CD4-positive, alpha-beta T cell (primary cell): ENCODE measurements at regions of chr5 and their contacts with region 1.

Region 1: DNA sequence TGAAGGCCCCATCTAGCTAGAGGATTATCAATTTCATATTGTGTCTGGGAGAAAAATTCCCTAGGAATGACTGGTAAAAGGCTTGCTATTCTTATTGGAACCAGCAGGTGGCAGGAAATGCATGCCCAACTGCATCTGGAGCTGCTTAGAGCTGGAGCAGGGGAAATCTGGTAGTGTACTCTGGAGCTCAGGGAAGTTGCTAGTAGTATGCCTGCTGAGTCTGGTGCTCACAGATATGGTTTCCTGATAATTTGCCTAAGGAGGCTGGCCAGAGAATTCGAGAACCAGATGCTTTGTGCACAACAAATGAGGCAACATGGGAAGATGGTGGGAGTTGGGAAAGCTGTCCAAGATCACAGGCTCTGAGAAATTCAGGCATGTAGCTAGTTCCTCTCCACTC is 53.7 kb downstream of the G3BP1 start:
- DNase-seq: peak in 9 of 14 experiments; percentile 5 to 68 (median 15)
- ATAC-seq: no peak
- H3K4me3 ChIP-seq: no peak overlapping the region
- H3K4me3 Mint-ChIP-seq: no peak overlapping the region
- H3K27ac ChIP-seq: no peak overlapping the region
- H3K27ac Mint-ChIP-seq: no peak overlapping the region
- H3K4me1 ChIP-seq: peaks cover 3% of the 10 kb centered on the region
- H3K4me1 Mint-ChIP-seq: peaks cover 22% of the 10 kb centered on the region
- H3K27me3 ChIP-seq: no peaks in the 10 kb centered on the region
- H3K27me3 Mint-ChIP-seq: no peaks in the 10 kb centered on the region
- CTCF ChIP-seq: peak; percentile 79

Region 2: DNA sequence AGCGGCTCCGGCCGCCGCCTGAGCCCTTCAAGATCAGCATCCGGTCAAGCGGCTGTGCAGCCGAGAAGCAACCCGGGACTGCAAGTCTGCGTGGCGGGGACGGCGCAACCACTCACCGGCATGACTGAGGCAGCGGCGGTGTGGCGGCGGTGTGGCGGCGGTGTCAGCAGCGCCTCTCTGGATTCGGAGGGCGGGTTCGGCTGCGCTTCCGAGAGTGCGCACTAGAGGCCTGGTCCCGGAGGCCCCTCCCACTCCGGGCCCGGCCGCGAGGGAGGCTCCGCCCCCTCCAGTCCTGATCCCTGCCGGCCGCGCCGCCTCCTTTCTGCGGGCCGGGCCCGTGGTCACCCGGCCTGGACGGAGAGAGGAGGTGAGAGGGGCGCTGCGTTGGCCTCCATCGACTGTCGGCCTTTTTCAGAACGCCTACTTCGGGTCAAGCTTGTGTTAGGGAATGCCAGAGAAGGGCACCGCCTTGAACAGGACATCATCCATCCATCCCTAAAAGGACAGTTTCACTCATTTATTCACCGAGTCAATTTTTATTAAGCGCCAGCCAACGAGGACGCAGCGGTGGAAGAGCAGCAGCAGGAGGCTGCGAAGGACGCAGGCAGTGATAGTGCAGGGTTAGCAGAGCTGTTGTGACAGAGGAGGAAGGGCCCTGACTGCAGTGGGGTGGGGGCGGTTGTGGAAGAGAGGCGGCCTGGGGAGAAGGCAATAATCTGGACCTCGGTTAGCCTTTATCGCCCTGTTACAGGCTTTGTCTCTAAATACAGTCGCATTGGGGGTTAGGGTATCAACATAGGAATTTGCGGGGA is 66.8 kb before region 1 on chr5 and contains the start of gene ATOX1:
- CTCF ChIA-PET with region 1: no interaction called
- POLR2A ChIA-PET with region 1: no interaction called
- intact Hi-C with region 1: no loop called
- DNase-seq: peak; percentile 84 to 96 (median 89)
- ATAC-seq: peak; percentile 98
- H3K4me3 ChIP-seq: peak within 1 kb of the TSS; percentile 95
- H3K4me3 Mint-ChIP-seq: peak within 1 kb of the TSS; percentile 97
- H3K27ac ChIP-seq: peak within 1 kb of the TSS; percentile 55 to 68
- H3K27ac Mint-ChIP-seq: peak within 1 kb of the TSS; percentile 95
- H3K4me1 ChIP-seq: peaks cover 39% of the 10 kb centered on the region
- H3K4me1 Mint-ChIP-seq: peaks cover 47% of the 10 kb centered on the region
- H3K27me3 ChIP-seq: no peaks in the 10 kb centered on the region
- H3K27me3 Mint-ChIP-seq: no peaks in the 10 kb centered on the region
- CTCF ChIP-seq: no peak
- total RNA-seq, gene ATOX1: 11.2 to 13.3 TPM

Region 3: DNA sequence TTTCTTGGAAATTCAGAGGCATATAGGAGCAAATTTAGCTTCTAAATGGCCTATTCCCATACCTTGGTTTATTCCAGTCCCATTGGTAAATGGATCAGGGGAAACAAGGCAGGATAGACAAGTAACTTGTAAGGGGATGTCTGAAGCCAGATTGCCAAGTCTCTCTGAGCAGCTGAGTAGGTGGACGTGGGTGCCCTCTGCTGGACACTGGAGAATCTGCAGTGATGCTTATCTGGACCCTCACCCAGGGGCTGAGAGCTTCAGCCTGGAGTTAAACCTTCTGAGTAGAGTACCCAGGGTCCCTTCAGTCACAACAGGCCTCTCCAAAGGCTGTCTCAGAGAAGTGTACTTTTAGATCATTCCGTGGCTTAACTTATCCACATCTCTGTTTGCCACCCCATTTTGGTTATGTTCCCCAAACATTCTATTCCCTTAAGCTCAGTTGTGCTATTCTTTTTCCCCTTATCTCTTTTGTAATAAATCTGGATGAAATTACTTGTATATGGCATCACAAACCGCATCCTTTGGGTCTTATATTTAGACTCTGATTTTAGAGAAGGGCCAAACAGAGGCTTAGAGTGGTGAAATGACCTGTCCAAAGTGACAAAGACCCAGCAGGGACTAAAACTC is 317.5 kb after region 1 on chr5:
- CTCF ChIA-PET with region 1: interaction called, 45 read pairs
- POLR2A ChIA-PET with region 1: interaction called, 5 read pairs
- intact Hi-C with region 1: loop called in 1 of 2 experiments (anchors 1 kb)
- DNase-seq: peak; percentile 41 to 79 (median 62)
- ATAC-seq: peak; percentile 56
- H3K4me3 ChIP-seq: no peak overlapping the region
- H3K4me3 Mint-ChIP-seq: no peak overlapping the region
- H3K27ac ChIP-seq: no peak overlapping the region
- H3K27ac Mint-ChIP-seq: no peak overlapping the region
- H3K4me1 ChIP-seq: no peaks in the 10 kb centered on the region
- H3K4me1 Mint-ChIP-seq: no peaks in the 10 kb centered on the region
- H3K27me3 ChIP-seq: no peaks in the 10 kb centered on the region
- H3K27me3 Mint-ChIP-seq: no peaks in the 10 kb centered on the region
- CTCF ChIP-seq: peak; percentile 81

Region 4: GRCh38 chr5:152271420-152271819 is 446.0 kb after region 1 on chr5:
- CTCF ChIA-PET with region 1: no interaction called
- POLR2A ChIA-PET with region 1: no interaction called
- intact Hi-C with region 1: loop called in 1 of 2 experiments (anchors 10 kb)
- DNase-seq: peak in 3 of 14 experiments; percentile 3 to 17 (median 13)
- ATAC-seq: no peak
- H3K4me3 ChIP-seq: no peak overlapping the region
- H3K4me3 Mint-ChIP-seq: no peak overlapping the region
- H3K27ac ChIP-seq: no peak overlapping the region
- H3K27ac Mint-ChIP-seq: no peak overlapping the region
- H3K4me1 ChIP-seq: no peaks in the 10 kb centered on the region
- H3K4me1 Mint-ChIP-seq: no peaks in the 10 kb centered on the region
- H3K27me3 ChIP-seq: no peaks in the 10 kb centered on the region
- H3K27me3 Mint-ChIP-seq: no peaks in the 10 kb centered on the region
- CTCF ChIP-seq: no peak

Region 5: DNA sequence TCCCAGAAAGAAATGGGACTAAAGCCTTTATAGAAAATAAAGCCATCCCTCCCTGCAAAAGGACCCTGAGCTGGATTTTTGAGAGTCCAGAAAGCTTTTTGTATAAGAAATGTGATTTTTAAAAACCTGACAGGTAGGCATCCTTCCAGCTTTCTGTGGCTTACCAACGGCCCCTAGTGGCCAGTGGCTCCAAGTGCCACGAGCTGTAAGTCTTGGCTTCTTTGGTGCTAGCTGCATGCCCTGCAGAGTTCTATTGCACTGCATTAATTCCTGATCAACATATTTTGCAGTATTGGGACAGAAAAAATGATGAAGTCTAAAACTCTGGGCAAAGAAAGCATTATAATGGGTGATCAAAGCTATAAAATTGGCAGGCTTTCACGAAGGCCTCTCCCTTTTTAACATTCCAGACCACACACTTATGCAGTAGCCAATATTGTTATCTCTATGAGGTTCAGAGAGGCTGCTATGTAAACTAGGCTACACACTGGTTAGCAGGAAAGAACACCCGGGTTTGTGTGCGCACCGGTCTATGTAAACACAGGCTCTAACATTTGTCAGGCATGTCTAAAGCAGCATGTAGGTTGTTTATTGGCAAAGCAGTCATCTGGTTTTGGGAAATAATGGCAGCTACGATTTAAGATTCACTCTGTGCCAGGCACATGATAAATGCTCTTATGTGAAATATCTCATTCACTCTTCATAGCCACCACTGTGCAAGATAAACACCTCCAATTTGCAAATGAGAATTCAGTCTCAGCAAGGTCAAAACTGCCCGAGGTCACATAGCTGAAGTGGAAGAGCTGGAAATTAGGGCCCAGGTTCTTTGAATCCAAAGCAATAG is 524.5 kb after region 1 on chr5:
- CTCF ChIA-PET with region 1: interaction called, 3 read pairs
- POLR2A ChIA-PET with region 1: no interaction called
- intact Hi-C with region 1: loop called (anchors 2 kb)
- DNase-seq: peak in 8 of 14 experiments; percentile 1 to 41 (median 14)
- ATAC-seq: no peak
- H3K4me3 ChIP-seq: no peak overlapping the region
- H3K4me3 Mint-ChIP-seq: no peak overlapping the region
- H3K27ac ChIP-seq: no peak overlapping the region
- H3K27ac Mint-ChIP-seq: no peak overlapping the region
- H3K4me1 ChIP-seq: no peaks in the 10 kb centered on the region
- H3K4me1 Mint-ChIP-seq: no peaks in the 10 kb centered on the region
- H3K27me3 ChIP-seq: peaks cover 0 to 4% of the 10 kb centered on the region in 2 experiments
- H3K27me3 Mint-ChIP-seq: no peaks in the 10 kb centered on the region
- CTCF ChIP-seq: peak; percentile 43

Region 6: GRCh38 chr5:152505442-152506042 is 680.1 kb after region 1 on chr5:
- CTCF ChIA-PET with region 1: no interaction called
- POLR2A ChIA-PET with region 1: interaction called, 4 read pairs
- intact Hi-C with region 1: loop called in 1 of 2 experiments (anchors 2 kb)
- DNase-seq: peak in 9 of 14 experiments; percentile 6 to 63 (median 21)
- ATAC-seq: no peak
- H3K4me3 ChIP-seq: no peak overlapping the region
- H3K4me3 Mint-ChIP-seq: no peak overlapping the region
- H3K27ac ChIP-seq: no peak overlapping the region
- H3K27ac Mint-ChIP-seq: no peak overlapping the region
- H3K4me1 ChIP-seq: peaks cover 4% of the 10 kb centered on the region
- H3K4me1 Mint-ChIP-seq: no peaks in the 10 kb centered on the region
- H3K27me3 ChIP-seq: peaks cover 0 to 6% of the 10 kb centered on the region in 2 experiments
- H3K27me3 Mint-ChIP-seq: peaks cover 47% of the 10 kb centered on the region
- CTCF ChIP-seq: peak; percentile 39